Motor neuron (in vitro differentiated cells): ENCODE measurements at regions of chr20 and their contacts with region 1.

Region 1: GRCh38 chr20:7113577-7114466 is 346.3 kb downstream of the BMP2 start:
- ATAC-seq: peak; percentile 42 to 99 (median 69)
- H3K4me3 ChIP-seq: no peak overlapping the region
- H3K27ac ChIP-seq: no peak overlapping the region
- H3K4me1 ChIP-seq: no peaks in the 10 kb centered on the region

Region 2: GRCh38 chr20:7272512-7272911 is 158.7 kb after region 1 on chr20:
- in situ Hi-C with region 1: loop called in 2 of 9 experiments (anchors 25 kb)
- ATAC-seq: peak in 2 of 8 experiments; percentile 42 to 52
- H3K4me3 ChIP-seq: no peak overlapping the region
- H3K27ac ChIP-seq: no peak overlapping the region
- H3K4me1 ChIP-seq: no peaks in the 10 kb centered on the region

Region 3: DNA sequence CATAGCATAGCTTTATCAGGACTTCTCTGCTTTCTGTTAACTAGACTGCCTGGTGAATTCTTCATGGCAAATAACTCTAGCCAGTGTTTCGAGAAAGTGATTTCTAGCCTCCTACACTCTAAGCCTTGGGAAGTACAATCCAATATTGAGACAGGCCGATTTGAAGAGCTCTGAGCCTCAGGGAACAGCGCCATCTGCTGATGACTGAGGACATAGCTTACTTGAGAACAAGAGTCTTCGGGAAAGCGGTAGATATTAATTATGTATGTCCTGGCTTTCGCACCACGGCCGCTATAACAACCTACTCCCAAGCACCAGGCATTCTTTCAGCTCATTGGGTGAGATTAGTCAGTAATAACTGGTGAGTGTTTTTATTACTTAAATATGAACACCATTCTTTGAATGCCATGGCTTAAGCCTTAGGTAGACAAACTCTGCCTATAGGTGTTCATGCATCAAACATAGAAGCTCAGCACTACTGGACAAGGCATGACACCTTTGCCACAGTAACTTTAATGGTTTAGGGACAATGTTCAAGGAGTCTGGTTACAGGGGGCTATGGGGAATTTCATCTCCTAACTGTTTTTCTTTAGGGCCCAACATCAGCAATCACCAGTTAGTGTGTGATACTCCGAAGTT is 172.2 kb after region 1 on chr20:
- in situ Hi-C with region 1: loop called in 1 of 9 experiments (anchors 25 kb)
- ATAC-seq: peak; percentile 86 to 99 (median 96)
- H3K4me3 ChIP-seq: no peak overlapping the region
- H3K27ac ChIP-seq: no peak overlapping the region
- H3K4me1 ChIP-seq: peaks cover 0 to 3% of the 10 kb centered on the region in 2 donors